ENCODE measurements at regions of chr2 and their contacts with region 1.

Region 1: GRCh38 chr2:133109772-133110171 is 439.8 kb upstream of the LYPD1 start:
- DNase-seq: no peak
- H3K4me3 ChIP-seq: no peak overlapping the region
- H3K27ac ChIP-seq: no peak overlapping the region
- H3K4me1 ChIP-seq: no peaks in the 10 kb centered on the region
- H3K27me3 ChIP-seq: no peaks in the 10 kb centered on the region
- CTCF ChIP-seq: no peak
- EP300 ChIP-seq: no peak
- POLR2A ChIP-seq: no peak

Region 2: GRCh38 chr2:131584940-131585339 is 1524.8 kb before region 1 on chr2:
- in situ Hi-C with region 1: no loop called
- intact Hi-C with region 1: loop called (anchors 5 kb)
- DNase-seq: no peak
- H3K4me3 ChIP-seq: no peak overlapping the region
- H3K27ac ChIP-seq: no peak overlapping the region
- H3K4me1 ChIP-seq: no peaks in the 10 kb centered on the region
- H3K27me3 ChIP-seq: peaks cover 3% of the 10 kb centered on the region
- CTCF ChIP-seq: no peak
- EP300 ChIP-seq: no peak
- POLR2A ChIP-seq: no peak

Region 3: DNA sequence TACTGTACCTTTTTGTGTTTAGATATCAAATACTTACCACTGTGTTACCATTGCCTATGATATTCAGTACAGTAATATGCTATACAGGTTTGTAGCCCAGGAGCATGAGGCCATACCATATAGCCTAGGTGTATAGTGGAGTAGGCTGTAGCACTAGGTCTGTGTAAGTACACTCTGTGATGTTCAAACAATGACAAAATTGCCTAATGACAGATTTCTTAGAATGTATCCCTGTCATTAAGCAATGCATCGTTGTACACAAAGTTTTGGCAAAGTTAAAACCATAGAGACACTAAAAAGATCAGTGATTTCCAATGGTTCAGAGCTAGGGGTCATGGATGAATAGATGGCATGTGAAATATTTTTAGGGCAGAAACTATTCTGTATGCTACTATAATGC is 43.0 kb after region 1 on chr2:
- in situ Hi-C with region 1: no loop called
- intact Hi-C with region 1: loop called (anchors 2 kb)
- DNase-seq: no peak
- H3K4me3 ChIP-seq: no peak overlapping the region
- H3K27ac ChIP-seq: no peak overlapping the region
- H3K4me1 ChIP-seq: no peaks in the 10 kb centered on the region
- H3K27me3 ChIP-seq: no peaks in the 10 kb centered on the region
- CTCF ChIP-seq: no peak
- EP300 ChIP-seq: no peak
- POLR2A ChIP-seq: no peak

Region 4: DNA sequence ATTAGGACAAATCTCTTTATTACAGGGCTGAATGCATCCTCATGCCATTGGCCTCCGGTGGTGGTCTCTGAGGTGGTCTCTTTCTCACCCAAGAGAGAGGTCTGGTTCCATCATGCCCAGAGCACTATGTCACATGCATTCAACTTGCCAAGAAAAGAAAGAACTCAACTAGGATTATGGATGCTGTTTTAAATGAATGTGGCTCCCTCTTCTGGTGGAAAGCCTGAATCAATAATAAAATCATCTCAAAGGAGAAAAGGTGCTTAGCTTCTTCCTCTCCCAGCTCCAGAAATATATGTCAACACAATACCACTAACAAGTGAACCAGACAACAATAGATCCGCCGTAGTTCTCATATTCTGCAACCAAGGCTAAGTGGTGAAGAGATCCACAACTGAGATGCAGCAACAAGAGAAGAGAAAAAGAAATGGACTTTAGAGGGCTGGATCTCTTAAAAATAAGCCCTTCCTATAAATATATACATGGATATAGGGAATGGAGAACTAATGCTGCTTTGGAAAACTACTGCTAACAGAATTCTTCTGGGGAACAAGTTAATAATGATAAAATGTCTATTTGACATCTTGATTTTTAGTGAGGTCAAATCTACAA is 61.7 kb after region 1 on chr2:
- in situ Hi-C with region 1: no loop called
- intact Hi-C with region 1: no loop called
- DNase-seq: no peak
- H3K4me3 ChIP-seq: no peak overlapping the region
- H3K27ac ChIP-seq: no peak overlapping the region
- H3K4me1 ChIP-seq: no peaks in the 10 kb centered on the region
- H3K27me3 ChIP-seq: no peaks in the 10 kb centered on the region
- CTCF ChIP-seq: peak; percentile 45 to 63 (median 58)
- EP300 ChIP-seq: no peak
- POLR2A ChIP-seq: no peak